ENCODE measurements at regions of chr2 and their contacts with region 1.

Region 1: DNA sequence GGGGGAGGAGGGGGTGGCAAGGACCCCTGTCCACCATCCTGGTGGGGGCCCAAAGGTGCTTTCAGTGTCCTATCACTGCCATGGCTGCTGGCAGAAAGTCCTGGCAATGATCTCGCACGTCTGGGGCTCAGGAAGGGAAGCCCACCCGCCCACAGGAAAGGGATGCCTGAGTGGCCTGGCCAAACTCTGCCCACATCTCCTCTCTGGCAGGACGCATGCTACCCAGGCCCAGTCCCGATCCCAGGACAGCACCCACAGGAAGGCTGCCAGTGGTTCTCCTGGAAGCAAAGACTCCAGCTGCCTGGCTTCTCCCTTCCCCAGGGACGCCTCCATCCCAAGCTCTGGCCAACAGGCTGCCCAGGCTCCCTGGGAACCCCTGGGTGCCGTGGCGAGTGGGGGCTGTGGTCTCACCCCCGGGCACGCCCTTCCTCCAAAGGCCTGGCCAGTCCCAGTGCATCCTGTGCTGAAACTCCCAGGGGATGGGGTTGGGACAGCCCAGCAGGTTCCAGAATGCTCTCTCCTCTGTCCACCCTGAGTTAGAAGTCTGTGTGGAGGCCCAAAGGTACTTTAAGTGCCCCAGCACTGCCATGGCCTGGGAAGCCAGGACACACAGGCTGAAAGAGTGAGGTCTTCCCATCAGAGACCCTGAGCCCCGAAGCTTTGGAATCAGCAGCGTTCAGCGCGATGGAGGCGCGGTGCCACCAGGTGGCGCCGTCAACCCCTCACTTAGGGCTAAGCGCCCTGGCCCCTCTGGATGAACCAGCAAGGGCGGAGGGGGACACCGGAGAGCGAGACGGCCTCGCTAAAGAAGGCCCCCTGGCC is 29.8 kb upstream of the TAF1B start:
- DNase-seq: peak; percentile 87

Region 2: GRCh38 chr2:9770308-9771100 is 43.0 kb before region 1 on chr2:
- CTCF ChIA-PET with region 1: no interaction called
- POLR2A ChIA-PET with region 1: no interaction called
- DNase-seq: peak; percentile 78

Region 3: DNA sequence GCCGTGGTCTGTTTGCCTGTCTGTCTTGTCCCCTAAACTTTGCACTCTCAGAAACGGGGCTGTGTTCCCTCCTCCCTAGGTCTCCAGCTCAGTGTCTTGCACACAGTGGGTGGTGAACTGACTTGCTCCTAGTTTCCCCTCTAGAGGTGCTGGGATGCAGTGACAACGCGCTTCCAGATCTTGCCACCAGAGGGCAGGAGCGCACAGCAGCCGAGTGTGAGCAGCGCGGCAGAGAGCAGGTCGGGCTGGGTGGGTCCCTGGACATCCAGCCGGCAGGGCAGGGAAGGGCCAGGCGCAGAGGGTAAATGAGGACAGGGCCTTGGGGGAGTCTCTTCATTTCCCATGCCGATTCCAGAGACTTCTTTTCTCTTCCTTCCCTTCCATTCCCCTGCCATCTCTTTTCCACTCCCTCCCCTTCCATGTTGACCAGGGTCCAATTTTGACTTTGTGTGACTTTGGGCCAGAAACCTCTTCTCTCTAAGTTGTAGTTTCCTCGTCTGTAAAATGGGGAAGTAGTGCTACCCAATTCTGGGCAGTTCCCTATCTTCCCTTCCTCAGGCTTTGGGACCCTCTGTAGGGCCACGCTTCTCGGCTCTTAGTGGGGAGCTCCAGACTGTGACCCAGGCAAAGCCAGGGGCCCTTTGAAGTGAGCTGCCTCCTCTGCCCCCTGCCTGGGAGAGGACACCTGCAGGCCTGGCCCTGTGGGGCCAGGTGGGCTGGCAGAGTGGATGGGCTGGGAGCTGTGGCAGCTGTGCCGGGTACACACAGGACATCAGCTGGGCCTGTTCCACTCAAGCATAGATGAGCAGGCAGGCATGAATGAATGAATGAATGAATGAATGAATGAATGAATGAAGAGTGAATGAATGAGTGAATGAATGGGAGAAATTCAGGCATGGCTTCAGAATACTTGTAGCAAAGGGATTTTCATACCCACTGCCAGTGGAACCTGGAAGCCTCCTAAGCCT is 13.6 kb before region 1 on chr2:
- CTCF ChIA-PET with region 1: interaction called, 31 read pairs
- POLR2A ChIA-PET with region 1: no interaction called
- DNase-seq: peak; percentile 91

Measured in HEK293T (cell line).